IMR-90 (cell line): ENCODE measurements at regions of chr5 and their contacts with region 1.

Region 1: GRCh38 chr5:35771309-35771708 is 85.4 kb upstream of the IL7R start:
- DNase-seq: peak; percentile 97
- ATAC-seq: peak; percentile 75
- H3K4me3 ChIP-seq: no peak overlapping the region
- H3K27ac ChIP-seq: peak overlapping the region; percentile 7; the same call in 1 of the 2 replicates
- H3K4me1 ChIP-seq: peaks cover 17% of the 10 kb centered on the region
- H3K27me3 ChIP-seq: no peaks in the 10 kb centered on the region
- CTCF ChIP-seq: no peak
- POLR2A ChIP-seq: no peak
- RAD21 ChIP-seq: no peak

Region 2: DNA sequence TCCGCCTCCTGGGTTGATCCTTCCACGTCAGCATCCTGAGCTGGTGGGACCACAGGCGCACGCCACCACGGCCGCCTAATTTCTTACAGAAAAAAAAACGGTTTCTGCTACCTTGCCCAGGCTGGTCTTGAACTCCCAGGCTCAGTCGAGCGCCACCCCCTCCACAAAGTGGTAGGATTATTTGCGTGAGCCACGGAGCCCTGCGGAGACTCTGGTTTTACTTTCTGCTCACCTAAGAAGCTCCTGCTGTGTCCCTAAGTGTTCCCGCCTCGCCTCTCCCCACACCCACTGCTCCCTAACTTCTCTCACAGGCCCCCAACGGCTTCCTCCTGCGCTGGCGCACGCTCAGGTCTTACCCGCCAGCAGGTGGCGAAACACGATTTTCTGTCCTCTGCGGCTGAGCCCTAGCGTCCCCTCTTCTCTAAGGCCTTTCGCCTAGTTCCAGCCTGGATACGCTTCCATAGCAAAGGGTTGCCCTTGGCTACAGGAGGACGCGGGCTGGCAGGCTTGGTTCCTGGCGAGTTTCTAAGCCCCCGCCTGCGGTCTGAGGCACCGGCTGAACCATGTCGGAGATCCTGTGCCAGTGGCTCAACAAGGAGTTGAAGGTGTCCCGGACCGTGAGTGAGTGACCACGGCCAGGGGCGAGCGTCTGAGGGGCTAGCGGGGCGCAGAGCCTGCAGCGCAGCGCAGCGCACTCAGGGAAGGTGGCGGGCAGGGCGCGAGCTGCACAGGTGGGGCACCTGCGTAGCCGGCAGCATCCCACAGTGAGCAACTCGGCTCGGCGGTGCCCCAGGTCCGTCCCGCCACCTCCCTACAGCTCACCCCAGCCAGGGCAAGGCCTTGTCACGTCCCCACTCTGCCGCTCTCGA is 153.6 kb before region 1 on chr5 and contains the start of gene SPEF2:
- CTCF ChIA-PET with region 1: no interaction called
- POLR2A ChIA-PET with region 1: no interaction called
- dilution Hi-C with region 1: no loop called
- in situ Hi-C with region 1: no loop called
- intact Hi-C with region 1: loop called (anchors 5 kb)
- DNase-seq: peak; percentile 91
- ATAC-seq: peak; percentile 100
- H3K4me3 ChIP-seq: peak within 1 kb of the TSS; percentile 78
- H3K27ac ChIP-seq: peak within 1 kb of the TSS; percentile 35
- H3K4me1 ChIP-seq: peaks cover 3% of the 10 kb centered on the region; the same call in 1 of the 2 replicates
- H3K27me3 ChIP-seq: no peaks in the 10 kb centered on the region
- CTCF ChIP-seq: peak; percentile 89
- POLR2A ChIP-seq: no peak
- RAD21 ChIP-seq: peak; percentile 72
- total RNA-seq, gene SPEF2: 2.3 and 2.5 TPM in 2 replicates

Region 3: GRCh38 chr5:35656721-35657120 is 114.6 kb before region 1 on chr5:
- CTCF ChIA-PET with region 1: interaction called, 3 read pairs
- POLR2A ChIA-PET with region 1: no interaction called
- dilution Hi-C with region 1: no loop called
- in situ Hi-C with region 1: no loop called
- intact Hi-C with region 1: loop called (anchors 5 kb)
- DNase-seq: peak; percentile 75
- ATAC-seq: peak; percentile 98
- H3K4me3 ChIP-seq: no peak overlapping the region
- H3K27ac ChIP-seq: no peak overlapping the region
- H3K4me1 ChIP-seq: peaks cover 2% of the 10 kb centered on the region; the same call in 1 of the 2 replicates
- H3K27me3 ChIP-seq: no peaks in the 10 kb centered on the region
- CTCF ChIP-seq: no peak
- POLR2A ChIP-seq: no peak
- RAD21 ChIP-seq: no peak